Activated CD4-positive, alpha-beta T cell treated with anti-CD3 and anti-CD28 coated beads, Interleukin-2, amount 10 ng/mL, durations not matched to agents 24 days and 14 days (primary cell): ENCODE measurements at regions of chr19 and their contacts with region 1.

Region 1: DNA sequence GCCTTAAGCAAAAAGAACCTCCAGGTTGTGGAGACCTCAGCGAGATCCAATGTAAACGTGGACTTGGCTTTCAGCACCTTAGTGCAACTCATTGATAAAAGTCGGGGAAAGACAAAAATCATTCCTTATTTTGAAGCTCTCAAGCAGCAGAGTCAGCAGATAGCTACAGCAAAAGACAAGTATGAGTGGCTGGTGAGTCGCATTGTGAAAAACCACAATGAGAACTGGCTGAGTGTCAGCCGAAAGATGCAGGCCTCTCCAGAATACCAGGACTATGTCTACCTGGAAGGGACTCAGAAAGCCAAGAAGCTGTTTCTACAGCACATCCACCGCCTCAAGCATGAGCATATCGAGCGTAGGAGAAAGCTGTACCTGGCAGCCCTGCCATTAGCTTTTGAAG is 58.5 kb downstream of the ARHGAP35 start:
- DNase-seq: no peak
- H3K4me3 Mint-ChIP-seq: no peak overlapping the region
- H3K27ac Mint-ChIP-seq: no peak overlapping the region
- H3K4me1 Mint-ChIP-seq: peaks cover 30% of the 10 kb centered on the region
- H3K27me3 Mint-ChIP-seq: no peaks in the 10 kb centered on the region

Region 2: GRCh38 chr19:46967578-46968027 is 48.3 kb after region 1 on chr19:
- intact Hi-C with region 1: loop called (anchors 5 kb)
- DNase-seq: peak; percentile 79
- H3K4me3 Mint-ChIP-seq: peak overlapping the region; percentile 64
- H3K27ac Mint-ChIP-seq: peak overlapping the region; percentile 70
- H3K4me1 Mint-ChIP-seq: peaks cover 47% of the 10 kb centered on the region
- H3K27me3 Mint-ChIP-seq: no peaks in the 10 kb centered on the region

Region 3: DNA sequence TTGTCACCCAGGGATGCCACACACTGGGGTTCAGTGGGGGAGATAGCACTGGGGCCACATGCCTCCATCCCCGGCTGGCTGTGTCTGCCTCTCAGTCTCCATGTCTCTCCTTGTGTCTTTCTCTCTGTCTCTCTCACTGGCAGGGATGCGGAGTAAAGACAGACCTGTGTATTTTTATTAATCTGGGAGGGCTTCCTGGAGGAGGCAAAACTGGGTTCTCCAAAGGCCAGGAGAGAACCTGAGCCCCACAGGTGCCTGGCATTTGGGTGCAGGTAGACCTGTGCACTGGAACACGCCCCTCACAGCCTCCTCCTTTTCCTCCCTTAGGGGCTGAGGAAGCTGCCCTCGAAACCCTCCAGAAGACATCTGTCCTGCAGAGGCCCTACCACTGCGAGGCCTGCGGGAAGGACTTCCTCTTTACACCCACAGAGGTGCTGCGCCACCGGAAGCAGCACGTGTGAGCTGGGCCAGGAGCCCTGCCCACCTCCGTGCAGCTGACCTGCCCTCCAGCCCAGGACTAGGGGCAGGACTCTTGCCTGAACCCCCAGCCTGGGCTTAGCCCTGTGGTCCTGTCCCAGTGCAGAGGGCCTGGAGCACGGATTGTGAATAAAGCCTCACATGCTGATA is 462.4 kb after region 1 on chr19:
- intact Hi-C with region 1: no loop called
- DNase-seq: peak; percentile 68
- H3K4me3 Mint-ChIP-seq: no peak overlapping the region
- H3K27ac Mint-ChIP-seq: peak overlapping the region; percentile 10
- H3K4me1 Mint-ChIP-seq: peaks cover 13% of the 10 kb centered on the region
- H3K27me3 Mint-ChIP-seq: no peaks in the 10 kb centered on the region